Posterior cingulate gyrus (tissue), 11 donors: ENCODE measurements at regions of chr3 and their contacts with region 1.

Region 1: DNA sequence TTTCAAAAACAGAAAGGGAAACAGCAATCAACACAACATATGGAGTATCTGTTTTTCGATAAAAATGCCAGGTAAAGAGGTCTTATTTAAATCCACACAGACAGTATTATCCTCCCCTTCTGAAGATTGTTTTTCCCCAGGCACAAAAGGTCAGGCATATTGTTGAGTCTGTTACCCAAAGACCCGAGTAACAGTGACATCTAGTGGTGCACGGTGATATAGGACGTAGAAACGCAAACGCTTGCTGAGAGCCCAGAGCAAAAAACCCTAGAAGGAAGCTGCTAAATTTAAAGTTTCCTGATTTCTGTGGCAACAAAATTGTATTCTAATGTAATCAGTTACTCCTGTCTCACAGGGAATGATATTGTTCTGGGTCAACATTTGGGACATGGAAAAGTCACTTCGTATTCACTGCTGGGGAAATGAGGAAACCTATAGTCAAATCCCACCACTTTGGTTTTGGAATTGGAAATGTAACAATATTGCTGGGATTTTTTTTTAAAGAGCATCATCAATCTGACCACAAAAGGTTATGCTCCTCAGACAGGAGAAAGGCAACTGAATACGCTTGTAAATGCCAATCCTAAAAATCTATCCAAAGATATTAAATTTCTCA is 312.7 kb upstream of the CCDC54 start:
- DNase-seq: peak in 7 of 10 donors; percentile 25 to 86 (median 74)

Region 2: GRCh38 chr3:106609666-106610301 is 454.8 kb before region 1 on chr3:
- intact Hi-C with region 1: loop called (anchors 10 kb)
- DNase-seq: peak in 7 of 10 donors; percentile 15 to 90 (median 49)